Activated CD4-positive, alpha-beta memory T cell treated with anti-CD3 and anti-CD28 coated beads for 36 hours (primary cell): ENCODE measurements at regions of chr11 and their contacts with region 1.

Region 1: DNA sequence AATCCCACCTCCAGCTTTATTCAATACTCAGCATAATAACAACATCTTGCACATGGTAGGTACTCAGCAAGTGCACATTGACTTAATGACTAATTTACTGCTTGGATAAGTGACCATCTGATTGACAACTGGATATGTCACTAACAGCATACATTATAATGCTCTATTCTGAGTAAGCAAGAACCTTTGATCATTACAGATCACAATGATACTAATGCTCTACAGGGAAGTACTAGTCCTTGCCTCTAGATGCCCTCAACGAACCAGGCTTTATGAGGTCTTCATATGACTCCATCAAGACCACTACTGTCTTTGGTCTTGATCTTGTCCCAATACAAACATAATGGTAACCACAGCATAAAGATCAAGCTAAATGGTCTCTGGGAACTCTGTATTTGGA is 167.6 kb upstream of the MTMR2 start:
- DNase-seq: no peak
- H3K4me3 Mint-ChIP-seq: no peak overlapping the region
- H3K27ac Mint-ChIP-seq: peak overlapping the region; percentile 73
- H3K4me1 Mint-ChIP-seq: peaks cover 53% of the 10 kb centered on the region
- H3K27me3 Mint-ChIP-seq: no peaks in the 10 kb centered on the region

Region 2: DNA sequence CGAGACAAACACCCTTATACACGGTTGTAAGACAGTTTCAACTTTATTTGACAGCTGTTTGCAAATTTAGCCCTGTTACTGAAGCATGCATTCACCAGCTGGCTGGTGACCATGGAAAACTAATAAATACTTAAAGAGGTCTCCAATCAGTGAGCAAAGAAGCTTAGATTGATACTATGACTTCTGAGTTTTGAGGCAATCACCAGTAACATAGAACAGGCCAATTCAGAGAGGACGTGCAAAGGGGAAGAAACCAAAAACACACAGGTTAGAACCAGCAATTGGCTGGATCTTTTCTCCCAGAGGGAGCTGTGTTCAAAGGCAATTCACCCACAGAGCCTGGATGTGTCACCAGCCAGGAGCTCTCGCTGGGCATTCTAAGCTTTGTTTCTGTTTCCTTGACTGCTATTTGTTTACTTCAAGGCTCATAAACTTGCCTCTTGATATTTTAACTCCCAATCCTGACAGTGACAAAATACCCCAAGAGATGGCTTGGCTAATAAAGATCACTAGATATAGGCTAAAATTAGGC is 54.0 kb before region 1 on chr11:
- CTCF ChIA-PET with region 1: no interaction called
- POLR2A ChIA-PET with region 1: no interaction called
- intact Hi-C with region 1: no loop called
- DNase-seq: no peak
- H3K4me3 Mint-ChIP-seq: no peak overlapping the region
- H3K27ac Mint-ChIP-seq: no peak overlapping the region
- H3K4me1 Mint-ChIP-seq: peaks cover 21% of the 10 kb centered on the region
- H3K27me3 Mint-ChIP-seq: no peaks in the 10 kb centered on the region

Region 3: DNA sequence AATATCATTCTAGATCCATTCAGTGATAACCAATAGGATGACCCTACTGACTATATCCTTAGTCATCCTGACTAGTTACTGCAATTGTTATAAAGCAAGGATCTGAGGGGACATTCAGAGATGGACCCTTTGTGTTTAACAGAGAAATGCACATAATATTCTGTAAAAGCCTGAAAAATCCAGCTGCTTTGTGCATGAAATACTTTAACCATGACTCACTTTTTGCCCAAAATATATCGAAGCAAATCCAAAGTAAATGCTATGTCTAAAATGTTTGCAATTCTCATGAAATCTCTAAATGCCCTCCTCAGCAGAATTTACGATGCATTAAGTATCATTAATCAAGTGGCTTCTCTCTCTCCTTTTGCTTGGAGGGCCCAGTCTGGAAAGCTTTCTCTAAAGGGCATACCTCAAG is 11.2 kb after region 1 on chr11:
- CTCF ChIA-PET with region 1: no interaction called
- POLR2A ChIA-PET with region 1: no interaction called
- intact Hi-C with region 1: no loop called
- DNase-seq: no peak
- H3K4me3 Mint-ChIP-seq: no peak overlapping the region
- H3K27ac Mint-ChIP-seq: no peak overlapping the region
- H3K4me1 Mint-ChIP-seq: peaks cover 41% of the 10 kb centered on the region
- H3K27me3 Mint-ChIP-seq: no peaks in the 10 kb centered on the region

Region 4: DNA sequence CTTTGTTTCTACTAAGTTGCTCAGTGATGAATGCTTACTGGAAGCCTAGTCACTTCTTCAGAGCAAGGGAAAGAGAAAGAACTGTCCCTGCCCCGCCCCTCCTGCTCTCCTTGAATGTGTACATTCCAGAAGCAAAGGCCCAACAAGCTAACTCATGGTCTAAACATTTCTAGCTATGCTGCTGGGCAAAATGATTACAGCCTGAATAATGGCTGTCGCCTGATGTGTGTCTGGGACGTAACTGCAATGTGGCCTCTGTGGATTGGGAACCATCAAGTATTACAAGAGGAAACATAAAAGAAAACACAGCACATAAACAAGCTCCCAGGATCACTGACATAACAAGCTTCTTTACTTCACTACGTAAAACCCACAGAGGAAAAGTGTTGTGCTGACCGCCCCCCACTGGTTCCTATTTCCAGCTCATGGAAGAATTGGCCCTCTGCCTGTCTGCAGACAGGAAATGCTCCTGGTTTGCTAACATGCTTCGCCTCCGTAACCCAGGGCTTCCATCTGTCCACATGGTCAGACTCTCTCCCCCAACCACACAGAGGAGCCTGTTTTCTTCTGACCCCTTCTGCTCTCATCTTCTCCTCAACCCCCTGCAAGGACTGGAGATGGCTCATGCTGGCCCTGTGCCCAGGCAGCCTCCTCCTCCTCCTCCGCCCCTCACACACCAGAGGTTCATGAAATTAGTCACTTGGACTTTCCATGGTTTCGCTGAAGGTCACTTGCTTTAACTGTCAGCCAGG is 64.3 kb after region 1 on chr11:
- CTCF ChIA-PET with region 1: no interaction called
- POLR2A ChIA-PET with region 1: no interaction called
- intact Hi-C with region 1: loop called (anchors 1 kb)
- DNase-seq: peak; percentile 88
- H3K4me3 Mint-ChIP-seq: peak overlapping the region; percentile 42
- H3K27ac Mint-ChIP-seq: peak overlapping the region; percentile 95
- H3K4me1 Mint-ChIP-seq: peaks cover 61% of the 10 kb centered on the region
- H3K27me3 Mint-ChIP-seq: no peaks in the 10 kb centered on the region